ENCODE measurements at regions of chr17 and their contacts with region 1.

Region 1: GRCh38 chr17:40287494-40288369 is at the start of gene CDC6:
- DNase-seq: peak; percentile 99
- ATAC-seq: peak; percentile 99
- total RNA-seq, gene CDC6: 1.9 TPM

Region 2: GRCh38 chr17:40018211-40019121 is 269.3 kb before region 1 on chr17:
- intact Hi-C with region 1: loop called (anchors 5 kb)
- DNase-seq: peak; percentile 43
- ATAC-seq: peak; percentile 37

Region 3: GRCh38 chr17:40203131-40203530 is 84.6 kb before region 1 on chr17:
- intact Hi-C with region 1: loop called (anchors 5 kb)
- DNase-seq: no peak
- ATAC-seq: no peak

Region 4: DNA sequence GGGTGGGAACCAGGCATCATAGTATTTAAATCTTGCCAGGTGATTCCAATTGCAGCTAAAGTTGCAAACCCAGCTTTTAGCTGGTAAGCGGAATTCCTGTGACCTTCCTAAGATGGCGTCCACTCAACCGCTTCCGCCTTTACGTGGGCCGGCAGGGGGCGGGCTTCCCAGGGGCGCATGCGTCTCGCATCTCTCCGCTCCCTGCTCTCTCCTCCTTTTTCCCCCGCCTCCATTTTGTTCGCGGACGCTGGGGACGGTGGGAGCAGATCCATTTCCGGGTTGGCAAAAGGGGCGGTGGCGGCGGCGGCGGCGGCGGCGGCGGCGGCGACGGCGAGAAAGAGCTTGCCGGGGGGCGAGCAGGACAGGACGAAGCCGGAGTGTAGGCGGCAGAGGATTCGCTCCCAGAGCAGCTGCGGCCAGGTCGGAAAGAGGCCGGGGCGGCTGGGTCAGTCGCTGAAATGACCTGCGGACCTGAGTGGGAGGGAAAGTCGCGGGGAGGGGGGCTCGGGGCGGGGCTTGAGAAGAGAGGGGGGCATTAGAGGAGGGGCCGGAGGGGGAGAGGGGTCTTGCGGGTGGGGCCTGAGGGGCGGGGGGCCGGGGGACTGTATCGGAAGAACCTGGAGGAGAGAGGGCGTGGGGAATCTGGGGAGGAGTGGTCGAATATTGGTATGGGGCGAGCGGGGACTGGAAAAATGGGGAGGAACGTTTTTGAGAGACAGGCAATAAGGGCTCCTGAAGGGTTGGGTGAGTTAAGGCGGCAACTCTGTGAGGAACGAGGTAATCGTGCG is 68.5 kb before region 1 on chr17 and contains the start of gene WIPF2:
- intact Hi-C with region 1: loop called (anchors 5 kb)
- DNase-seq: peak; percentile 97
- ATAC-seq: peak; percentile 99
- total RNA-seq, gene WIPF2: 12.3 TPM